HCT116 (cell line): ENCODE measurements at regions of chr1 and their contacts with region 1.

Region 1: DNA sequence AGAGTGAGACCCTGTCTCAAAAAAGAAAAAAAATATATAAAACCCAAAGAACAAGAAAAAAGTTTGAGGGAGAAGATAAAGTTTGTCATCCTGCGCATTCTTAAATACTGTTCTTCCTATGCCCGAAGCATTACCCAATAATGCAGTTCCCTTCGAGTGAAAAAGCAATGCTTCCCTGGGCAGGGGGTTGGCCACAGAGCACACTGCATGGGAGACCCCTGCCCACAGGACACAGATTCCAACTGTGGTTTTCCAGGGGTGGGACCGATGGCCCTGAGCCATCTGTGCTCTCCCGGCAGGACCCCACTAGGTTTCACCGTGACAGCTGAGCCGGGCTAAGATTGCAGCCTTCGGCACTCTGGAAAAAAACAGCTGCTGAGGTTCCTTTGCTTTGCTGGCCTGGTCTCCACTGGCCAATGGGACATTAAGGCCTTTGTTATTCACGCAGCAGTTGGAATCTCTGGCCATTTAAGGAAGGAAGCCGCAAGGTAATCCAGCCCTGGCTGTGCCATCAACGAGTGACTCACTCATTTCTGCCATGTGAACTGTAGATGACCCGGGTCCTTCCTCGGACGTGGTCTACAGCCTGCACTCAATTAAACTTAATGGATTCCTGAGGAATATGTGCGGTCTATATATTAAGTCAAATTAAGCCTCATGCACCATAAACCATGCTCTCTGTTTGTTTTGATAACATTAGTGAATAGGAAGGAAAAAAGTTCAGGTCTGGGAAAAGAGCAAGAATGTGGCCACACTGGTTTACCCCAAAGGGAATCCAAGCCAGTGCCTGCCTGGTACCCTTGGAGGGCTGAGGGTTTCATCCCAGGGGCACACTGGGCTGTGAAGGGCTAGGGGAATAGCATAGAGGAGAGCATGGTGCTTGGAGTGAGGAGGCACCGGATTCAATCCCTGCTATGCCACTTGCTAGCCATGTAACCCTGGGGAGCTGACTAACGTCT is 163.2 kb downstream of the ZBTB18 start:
- DNase-seq: peak; percentile 79
- ATAC-seq: peak; percentile 82
- H3K4me3 ChIP-seq: peak overlapping the region in 1 of 2 experiments; percentile 27; a peak in 2 of 4 replicates
- H3K27ac ChIP-seq: peak overlapping the region; percentile 48
- H3K4me1 ChIP-seq: peaks cover 11 to 24% of the 10 kb centered on the region in 2 experiments
- H3K27me3 ChIP-seq: no peaks in the 10 kb centered on the region
- CTCF ChIP-seq: no peak
- POLR2A ChIP-seq: no peak
- RAD21 ChIP-seq: peak; percentile 8; the same call in 1 of the 2 replicates

Region 2: GRCh38 chr1:244047621-244048471 is 166.4 kb before region 1 on chr1:
- CTCF ChIA-PET with region 1: no interaction called
- POLR2A ChIA-PET with region 1: no interaction called
- RAD21 ChIA-PET with region 1: no interaction called
- intact Hi-C with region 1: loop called (anchors 5 kb)
- DNase-seq: peak; percentile 94
- ATAC-seq: peak; percentile 96
- H3K4me3 ChIP-seq: peak overlapping the region; percentile 60 to 70
- H3K27ac ChIP-seq: no peak overlapping the region
- H3K4me1 ChIP-seq: peaks cover 8 to 14% of the 10 kb centered on the region in 2 experiments; a peak in 3 of 4 replicates
- H3K27me3 ChIP-seq: peaks cover 76% of the 10 kb centered on the region
- CTCF ChIP-seq: no peak
- POLR2A ChIP-seq: no peak
- RAD21 ChIP-seq: no peak

Region 3: DNA sequence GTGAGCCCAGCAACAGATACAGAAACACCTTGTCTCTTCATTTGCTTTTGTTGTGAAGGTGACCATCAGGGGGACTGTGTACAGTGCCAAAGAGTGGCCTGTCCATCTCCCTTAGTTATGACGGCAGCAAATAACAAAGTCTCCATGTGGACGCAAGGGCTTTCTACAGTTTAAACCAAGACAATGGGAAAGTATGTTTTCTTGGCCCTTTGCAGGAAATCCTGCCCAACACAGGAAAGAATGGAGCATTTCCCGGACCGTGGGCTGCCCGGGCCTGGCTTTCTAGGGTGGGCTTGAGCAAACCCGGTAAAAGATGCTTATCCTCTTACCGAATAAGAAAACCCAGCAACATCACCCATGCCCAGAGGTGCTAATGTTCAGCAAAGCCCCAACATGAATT is 75.9 kb before region 1 on chr1:
- CTCF ChIA-PET with region 1: no interaction called
- POLR2A ChIA-PET with region 1: no interaction called
- RAD21 ChIA-PET with region 1: no interaction called
- intact Hi-C with region 1: no loop called
- DNase-seq: no peak
- ATAC-seq: no peak
- H3K4me3 ChIP-seq: no peak overlapping the region
- H3K27ac ChIP-seq: no peak overlapping the region
- H3K4me1 ChIP-seq: no peaks in the 10 kb centered on the region
- H3K27me3 ChIP-seq: peaks cover 82% of the 10 kb centered on the region
- CTCF ChIP-seq: no peak
- POLR2A ChIP-seq: no peak
- RAD21 ChIP-seq: no peak

Region 4: DNA sequence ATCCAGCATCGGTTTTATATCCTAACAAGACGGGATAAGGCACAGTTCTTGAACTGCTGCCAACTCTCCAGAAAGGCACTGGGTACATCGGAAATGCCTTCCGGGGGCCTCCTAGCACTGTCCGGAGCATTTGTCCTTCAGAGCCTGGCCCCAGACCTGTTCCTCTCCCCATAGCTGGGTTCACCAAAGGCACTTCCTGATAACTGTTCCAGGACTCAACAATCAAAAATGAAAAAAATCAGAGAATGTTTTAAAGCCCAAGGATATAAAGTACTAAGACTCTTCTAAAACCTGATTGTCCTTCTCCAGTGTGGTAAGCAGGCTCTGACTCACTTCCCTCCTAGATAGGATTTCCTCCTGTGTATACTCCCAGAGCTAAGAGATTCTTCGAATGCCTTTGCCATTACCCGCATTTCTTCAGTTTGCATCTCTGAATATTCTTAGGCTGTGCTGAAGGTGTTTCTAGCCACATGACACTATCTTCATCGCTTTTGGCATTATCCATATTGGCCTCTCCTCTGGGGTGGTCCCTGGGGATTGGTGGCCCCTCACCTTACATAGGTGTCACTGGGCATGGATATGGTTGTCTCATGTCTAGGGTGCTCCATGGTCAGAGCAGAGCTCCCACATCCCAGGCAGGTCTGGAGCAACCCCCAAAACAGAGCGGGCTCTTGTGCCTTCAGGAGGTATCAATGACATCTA is 50.3 kb before region 1 on chr1:
- CTCF ChIA-PET with region 1: no interaction called
- POLR2A ChIA-PET with region 1: no interaction called
- RAD21 ChIA-PET with region 1: no interaction called
- intact Hi-C with region 1: loop called (anchors 2 kb)
- DNase-seq: peak; percentile 83
- ATAC-seq: peak; percentile 93
- H3K4me3 ChIP-seq: peak overlapping the region; percentile 11 to 45; a peak in 3 of 4 replicates
- H3K27ac ChIP-seq: peak overlapping the region; percentile 71
- H3K4me1 ChIP-seq: peaks cover 13 to 24% of the 10 kb centered on the region in 2 experiments
- H3K27me3 ChIP-seq: no peaks in the 10 kb centered on the region
- CTCF ChIP-seq: no peak
- POLR2A ChIP-seq: no peak
- RAD21 ChIP-seq: peak; percentile 12; the same call in 1 of the 2 replicates